Body of pancreas (tissue), 4 donors: ENCODE measurements at regions of chr4 and their contacts with region 1.

Region 1: GRCh38 chr4:159206427-159206871 is 103.6 kb downstream of the RAPGEF2 start:
- DNase-seq: no peak
- ATAC-seq: no peak
- H3K4me3 ChIP-seq: no peak overlapping the region
- H3K27ac ChIP-seq: no peak overlapping the region
- H3K4me1 ChIP-seq: no peaks in the 10 kb centered on the region
- H3K27me3 ChIP-seq: no peaks in the 10 kb centered on the region
- CTCF ChIP-seq: no peak
- POLR2A ChIP-seq: no peak

Region 2: GRCh38 chr4:158172261-158173258 is 1033.9 kb before region 1 on chr4 and contains the start of gene GASK1B:
- intact Hi-C with region 1: no loop called
- DNase-seq: peak; percentile 26 to 60 (median 54)
- ATAC-seq: peak; percentile 75
- H3K4me3 ChIP-seq: peak within 1 kb of the TSS in 1 of 2 donors; percentile 1
- H3K27ac ChIP-seq: peak within 1 kb of the TSS in 3 of 4 donors; percentile 60 to 74 (median 73)
- H3K4me1 ChIP-seq: peaks cover 59% of the 10 kb centered on the region
- H3K27me3 ChIP-seq: no peaks in the 10 kb centered on the region
- CTCF ChIP-seq: peak in 6 of 7 experiments; percentile 17 to 64 (median 59)
- POLR2A ChIP-seq: no peak
- total RNA-seq, gene GASK1B: 15.5 to 22.3 TPM

Region 3: GRCh38 chr4:158722917-158723793 is 483.3 kb before region 1 on chr4 and contains the start of gene PPID:
- intact Hi-C with region 1: loop called (anchors 10 kb)
- DNase-seq: peak; percentile 78 to 88 (median 84)
- ATAC-seq: peak; percentile 96
- H3K4me3 ChIP-seq: peak within 1 kb of the TSS; percentile 40 to 54
- H3K27ac ChIP-seq: peak within 1 kb of the TSS; percentile 75 to 87 (median 85)
- H3K4me1 ChIP-seq: peaks cover 13% of the 10 kb centered on the region
- H3K27me3 ChIP-seq: no peaks in the 10 kb centered on the region
- CTCF ChIP-seq: peak in 1 of 7 experiments; percentile 8
- POLR2A ChIP-seq: peak; percentile 57 to 89 (median 85)
- total RNA-seq, gene PPID: 15.5 to 19.7 TPM

Region 4: GRCh38 chr4:158856852-158857251 is 349.6 kb before region 1 on chr4:
- intact Hi-C with region 1: loop called (anchors 10 kb)
- DNase-seq: no peak
- ATAC-seq: peak; percentile 65
- H3K4me3 ChIP-seq: no peak overlapping the region
- H3K27ac ChIP-seq: no peak overlapping the region
- H3K4me1 ChIP-seq: no peaks in the 10 kb centered on the region
- H3K27me3 ChIP-seq: no peaks in the 10 kb centered on the region
- CTCF ChIP-seq: peak; percentile 11 to 60 (median 49)
- POLR2A ChIP-seq: no peak